ENCODE measurements at regions of chr4 and their contacts with region 1.

Region 1: GRCh38 chr4:80173401-80173800 is 23.9 kb upstream of the PRDM8 start:
- DNase-seq: no peak
- ATAC-seq: peak; percentile 97
- H3K4me3 Mint-ChIP-seq: peak overlapping the region; percentile 38
- H3K27ac Mint-ChIP-seq: peak overlapping the region; percentile 72
- H3K4me1 Mint-ChIP-seq: peaks cover 37% of the 10 kb centered on the region
- H3K27me3 Mint-ChIP-seq: no peaks in the 10 kb centered on the region

Region 2: GRCh38 chr4:80058740-80059139 is 114.7 kb before region 1 on chr4:
- POLR2A ChIA-PET with region 1: no interaction called
- DNase-seq: no peak
- ATAC-seq: peak; percentile 90
- H3K4me3 Mint-ChIP-seq: peak overlapping the region; percentile 75
- H3K27ac Mint-ChIP-seq: peak overlapping the region; percentile 90
- H3K4me1 Mint-ChIP-seq: peaks cover 23% of the 10 kb centered on the region
- H3K27me3 Mint-ChIP-seq: no peaks in the 10 kb centered on the region

Region 3: DNA sequence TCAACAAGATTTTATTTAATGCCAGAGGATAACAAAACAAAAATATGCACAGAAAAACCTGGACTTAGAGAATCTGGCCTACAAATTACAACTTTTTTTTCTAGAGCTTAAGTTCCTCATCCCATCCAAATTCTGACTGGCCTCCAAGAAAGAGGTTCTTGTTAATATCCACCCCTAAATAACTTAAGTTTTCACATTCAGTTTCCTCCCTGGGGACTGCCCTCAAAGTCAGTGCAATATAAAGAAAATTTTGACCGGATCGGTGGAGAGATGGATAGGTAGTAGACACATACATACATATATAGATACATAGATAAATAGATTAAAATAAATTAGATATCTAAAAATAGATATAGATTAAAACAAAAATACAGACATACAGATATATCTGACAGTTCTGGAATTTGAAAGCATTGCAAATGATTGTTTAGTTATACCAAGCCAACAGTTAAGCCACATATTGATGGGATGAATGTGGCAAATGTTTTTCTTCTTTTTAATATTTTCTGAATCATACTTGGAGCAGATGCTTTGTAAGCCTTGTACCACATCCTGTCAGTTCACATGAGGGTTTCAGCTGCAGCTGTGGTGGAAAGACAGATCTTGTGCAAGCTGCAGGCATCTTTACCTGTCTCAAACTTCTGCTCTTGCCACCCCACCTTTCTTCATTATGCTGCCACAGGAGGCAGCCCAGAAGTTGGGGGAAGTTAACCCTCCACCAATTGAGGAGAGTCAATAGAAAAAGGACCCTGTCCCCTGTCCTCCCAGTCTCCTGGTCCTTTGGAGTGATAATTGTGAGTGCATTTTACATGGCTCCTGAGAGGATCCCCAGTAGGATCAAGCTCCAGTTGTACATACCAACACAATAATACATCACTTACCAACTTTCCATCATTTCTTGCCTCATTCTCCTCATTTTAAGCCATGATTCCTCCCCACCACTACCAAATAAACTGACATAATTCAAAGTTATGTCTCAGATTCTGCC is 34.6 kb before region 1 on chr4:
- POLR2A ChIA-PET with region 1: interaction called, 14 read pairs
- DNase-seq: peak; percentile 45
- ATAC-seq: peak; percentile 96
- H3K4me3 Mint-ChIP-seq: peak overlapping the region; percentile 44
- H3K27ac Mint-ChIP-seq: peak overlapping the region; percentile 74
- H3K4me1 Mint-ChIP-seq: peaks cover 36% of the 10 kb centered on the region
- H3K27me3 Mint-ChIP-seq: no peaks in the 10 kb centered on the region

Region 4: DNA sequence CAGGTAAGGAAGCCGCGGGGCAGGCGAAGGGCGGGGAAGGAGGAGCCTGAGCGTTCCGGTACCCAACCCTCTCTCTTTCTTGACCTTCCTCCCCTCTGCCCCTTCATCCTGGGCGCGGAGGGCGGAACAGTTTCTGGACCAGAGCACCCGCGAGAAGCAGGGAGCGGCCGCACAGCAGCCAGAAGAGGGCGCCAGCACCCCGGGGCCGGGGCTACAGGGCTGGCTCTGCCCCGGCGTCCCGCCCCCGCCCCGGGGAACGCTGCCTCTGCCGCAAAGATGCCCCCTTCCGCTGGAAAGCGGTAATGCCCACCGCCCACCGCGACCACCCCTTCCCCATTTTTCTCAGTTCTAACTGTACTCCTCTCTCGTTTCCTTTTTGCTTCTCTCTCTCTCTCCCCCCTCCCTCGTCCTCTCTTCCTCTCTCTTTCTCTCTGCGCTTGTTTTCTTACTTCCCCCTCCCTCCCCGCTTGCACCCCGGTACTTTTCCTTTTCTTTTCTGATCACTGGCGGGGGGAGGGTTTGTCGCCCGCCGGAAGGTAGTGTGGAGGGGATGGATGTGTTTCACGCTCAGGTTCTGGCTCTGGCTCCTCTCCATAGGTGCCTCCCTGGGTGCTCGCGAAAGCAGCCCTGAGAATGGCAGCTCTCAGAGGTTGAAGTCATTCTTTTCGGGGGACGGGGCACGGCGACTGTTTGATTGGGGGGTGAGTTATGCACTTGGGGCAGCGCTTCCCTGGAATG is 10.8 kb after region 1 on chr4:
- POLR2A ChIA-PET with region 1: interaction called, 22 read pairs
- DNase-seq: peak; percentile 97
- ATAC-seq: peak; percentile 94
- H3K4me3 Mint-ChIP-seq: peak overlapping the region; percentile 93
- H3K27ac Mint-ChIP-seq: peak overlapping the region; percentile 91
- H3K4me1 Mint-ChIP-seq: peaks cover 30% of the 10 kb centered on the region
- H3K27me3 Mint-ChIP-seq: peaks cover 33% of the 10 kb centered on the region

Region 5: DNA sequence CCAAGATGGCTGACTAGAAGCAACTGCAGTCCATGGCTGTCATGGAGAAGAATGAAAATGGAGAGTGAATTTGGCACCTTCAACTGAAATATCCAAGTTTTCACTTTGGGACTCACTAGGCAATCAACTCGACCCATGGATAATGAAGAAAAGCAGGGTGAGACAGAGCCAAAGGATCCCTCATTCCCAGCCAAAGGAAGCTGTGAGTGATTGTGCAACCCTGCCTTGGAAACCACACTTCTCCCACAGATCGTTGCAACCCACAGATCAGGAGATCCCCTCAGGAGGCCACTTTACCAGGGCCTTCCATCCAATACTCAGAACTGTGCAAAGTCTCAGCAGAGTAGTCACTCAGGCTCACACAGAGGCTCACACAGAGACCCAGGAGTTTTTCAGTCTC is 166.6 kb after region 1 on chr4:
- POLR2A ChIA-PET with region 1: no interaction called
- DNase-seq: no peak
- ATAC-seq: no peak
- H3K4me3 Mint-ChIP-seq: no peak overlapping the region
- H3K27ac Mint-ChIP-seq: no peak overlapping the region
- H3K4me1 Mint-ChIP-seq: peaks cover 12% of the 10 kb centered on the region
- H3K27me3 Mint-ChIP-seq: peaks cover 12% of the 10 kb centered on the region

Measured in activated naive CD8-positive, alpha-beta T cell treated with anti-CD3 and anti-CD28 coated beads, Interleukin-2, amount 10 ng/mL, durations not matched to agents 7 days and 5 days (primary cell).